ENCODE measurements at regions of chr3 and their contacts with region 1.

Region 1: DNA sequence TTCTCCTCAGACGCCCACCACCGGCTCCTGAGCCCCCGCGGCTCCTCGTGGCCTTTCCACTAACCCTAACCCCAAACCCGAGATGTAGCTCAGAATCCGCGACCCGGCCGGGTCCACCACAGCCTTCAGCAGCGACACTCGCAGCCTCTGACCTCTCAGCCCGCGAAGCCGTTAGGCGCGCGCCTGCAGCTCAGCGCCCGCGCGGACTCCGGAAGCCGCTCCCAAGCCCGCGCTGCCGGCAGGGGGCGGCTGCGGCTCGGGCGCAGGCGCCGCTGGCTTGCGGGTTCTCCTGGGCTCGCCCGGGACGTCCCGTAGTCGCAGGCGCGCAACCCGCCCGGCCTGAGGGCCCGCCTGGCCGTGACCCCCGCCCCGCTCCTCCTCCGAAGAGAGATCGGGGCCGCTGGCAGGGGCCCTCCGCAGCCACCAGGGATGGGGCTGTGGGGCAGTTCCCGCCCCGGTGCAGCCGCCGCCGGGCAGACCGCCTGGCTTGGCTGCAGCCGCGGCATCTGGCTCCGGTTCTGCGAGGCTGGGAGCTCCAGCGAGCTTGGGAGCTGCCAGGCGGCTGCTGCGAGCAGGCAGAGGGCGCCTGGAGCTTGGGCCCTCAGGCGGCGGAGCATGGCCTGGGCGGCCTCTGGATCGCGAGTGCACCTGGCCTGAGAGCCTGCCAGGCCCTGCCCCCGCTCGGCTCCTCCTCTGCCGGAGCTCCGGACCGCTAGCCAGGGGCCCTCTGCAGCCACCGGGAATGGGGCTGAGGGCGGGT is 120.7 kb downstream of the LMLN start:
- DNase-seq: peak; percentile 56
- ATAC-seq: peak; percentile 99
- H3K4me3 ChIP-seq: peak overlapping the region; percentile 40
- H3K27ac ChIP-seq: no peak overlapping the region
- H3K4me1 ChIP-seq: 0 out of 2 replicates have a peak, but pooled peaks cover 2% of the 10 kb centered on the region
- H3K27me3 ChIP-seq: peaks cover 37% of the 10 kb centered on the region
- CTCF ChIP-seq: peak; percentile 72
- POLR2A ChIP-seq: no peak
- RAD21 ChIP-seq: peak; percentile 27; the same call in 1 of the 2 replicates

Region 2: GRCh38 chr3:197234947-197235914 is 845.5 kb before region 1 on chr3:
- CTCF ChIA-PET with region 1: no interaction called
- POLR2A ChIA-PET with region 1: no interaction called
- dilution Hi-C with region 1: no loop called
- in situ Hi-C with region 1: no loop called
- intact Hi-C with region 1: no loop called
- DNase-seq: no peak
- ATAC-seq: no peak
- H3K4me3 ChIP-seq: no peak overlapping the region
- H3K27ac ChIP-seq: no peak overlapping the region
- H3K4me1 ChIP-seq: peaks cover 1% of the 10 kb centered on the region; the same call in 1 of the 2 replicates
- H3K27me3 ChIP-seq: no peaks in the 10 kb centered on the region
- CTCF ChIP-seq: no peak
- POLR2A ChIP-seq: no peak
- RAD21 ChIP-seq: no peak

Region 3: GRCh38 chr3:197858598-197858997 is 222.1 kb before region 1 on chr3:
- CTCF ChIA-PET with region 1: no interaction called
- POLR2A ChIA-PET with region 1: no interaction called
- dilution Hi-C with region 1: no loop called
- in situ Hi-C with region 1: no loop called
- intact Hi-C with region 1: no loop called
- DNase-seq: no peak
- ATAC-seq: no peak
- H3K4me3 ChIP-seq: no peak overlapping the region
- H3K27ac ChIP-seq: no peak overlapping the region
- H3K4me1 ChIP-seq: peaks cover 2% of the 10 kb centered on the region; the same call in 1 of the 2 replicates
- H3K27me3 ChIP-seq: no peaks in the 10 kb centered on the region
- CTCF ChIP-seq: no peak
- POLR2A ChIP-seq: no peak
- RAD21 ChIP-seq: no peak

Region 4: DNA sequence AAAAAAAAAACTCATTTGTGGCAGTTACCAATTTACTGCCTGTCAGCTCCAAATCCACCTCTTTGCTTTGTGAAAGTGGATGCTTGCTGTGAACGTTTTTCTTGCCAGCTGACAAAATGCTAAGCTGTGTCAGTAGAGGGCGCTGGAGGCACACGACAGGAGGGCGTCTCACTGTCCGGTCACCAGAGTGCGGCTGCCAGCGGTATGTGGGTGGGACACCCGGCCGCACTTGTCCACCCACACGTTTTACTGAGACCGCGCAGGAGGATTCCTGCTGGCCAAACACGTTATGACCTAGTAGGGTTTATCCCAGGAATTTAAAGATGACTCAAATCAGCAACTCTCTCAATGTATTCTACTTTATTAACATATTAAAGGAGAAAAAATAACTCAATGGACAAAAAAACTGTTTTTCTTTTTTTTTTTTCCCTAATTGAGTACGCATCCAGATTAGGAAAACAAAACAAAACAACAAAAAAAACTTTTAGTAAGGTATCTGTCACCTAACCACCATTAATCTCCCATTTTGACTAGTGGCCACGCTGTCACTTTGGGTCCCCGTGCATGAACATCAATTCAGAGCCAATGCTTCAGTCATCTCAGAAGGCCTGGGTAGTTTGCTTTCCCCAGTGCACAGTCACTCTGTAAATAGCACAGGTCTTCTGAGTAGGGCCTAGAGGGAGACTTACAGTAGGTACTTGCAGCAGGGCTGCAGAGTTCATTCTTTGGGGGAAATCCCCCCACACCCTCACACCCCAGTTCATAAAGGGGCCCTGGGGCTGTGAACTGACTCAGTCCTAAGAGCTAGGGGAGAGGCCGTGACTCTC is 174.5 kb before region 1 on chr3:
- CTCF ChIA-PET with region 1: no interaction called
- POLR2A ChIA-PET with region 1: no interaction called
- dilution Hi-C with region 1: no loop called
- in situ Hi-C with region 1: no loop called
- intact Hi-C with region 1: loop called (anchors 10 kb)
- DNase-seq: peak; percentile 98
- ATAC-seq: peak; percentile 99
- H3K4me3 ChIP-seq: no peak overlapping the region
- H3K27ac ChIP-seq: no peak overlapping the region
- H3K4me1 ChIP-seq: no peaks in the 10 kb centered on the region
- H3K27me3 ChIP-seq: no peaks in the 10 kb centered on the region
- CTCF ChIP-seq: peak; percentile 99
- POLR2A ChIP-seq: no peak
- RAD21 ChIP-seq: peak; percentile 97

Region 5: GRCh38 chr3:197959898-197960693 is 120.6 kb before region 1 on chr3 and contains the start of gene LMLN:
- CTCF ChIA-PET with region 1: interaction called, 3 read pairs
- POLR2A ChIA-PET with region 1: no interaction called
- dilution Hi-C with region 1: no loop called
- in situ Hi-C with region 1: no loop called
- intact Hi-C with region 1: loop called (anchors 10 kb)
- DNase-seq: peak; percentile 94
- ATAC-seq: peak; percentile 94
- H3K4me3 ChIP-seq: peak within 1 kb of the TSS; percentile 64
- H3K27ac ChIP-seq: peak within 1 kb of the TSS; percentile 28
- H3K4me1 ChIP-seq: 0 out of 2 replicates have a peak, but pooled peaks cover 3% of the 10 kb centered on the region
- H3K27me3 ChIP-seq: no peaks in the 10 kb centered on the region
- CTCF ChIP-seq: no peak
- POLR2A ChIP-seq: peak; percentile 91
- RAD21 ChIP-seq: no peak
- total RNA-seq, gene LMLN: 3.3 and 3.9 TPM in 2 replicates

Region 6: DNA sequence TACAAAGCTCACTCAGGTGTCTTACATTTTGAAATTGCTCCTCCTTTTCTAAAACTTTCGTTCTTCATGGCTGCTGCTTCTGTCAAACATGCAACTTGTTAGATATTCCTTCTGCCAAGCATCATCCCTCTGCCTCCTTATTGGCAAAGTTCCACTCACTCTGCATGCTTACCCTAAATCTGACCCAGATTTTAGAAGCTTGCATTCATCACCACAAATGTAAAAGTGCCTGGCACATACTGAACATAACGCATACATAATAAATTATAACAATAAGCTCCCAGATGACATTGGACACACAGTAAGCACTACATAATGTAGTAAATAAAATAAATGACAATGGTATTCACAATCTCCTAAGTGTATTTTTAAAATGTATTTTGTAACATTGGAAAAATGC is 13.3 kb before region 1 on chr3:
- CTCF ChIA-PET with region 1: interaction called, 13 read pairs
- POLR2A ChIA-PET with region 1: no interaction called
- dilution Hi-C with region 1: no loop called
- in situ Hi-C with region 1: no loop called
- intact Hi-C with region 1: no loop called
- DNase-seq: no peak
- ATAC-seq: no peak
- H3K4me3 ChIP-seq: no peak overlapping the region
- H3K27ac ChIP-seq: no peak overlapping the region
- H3K4me1 ChIP-seq: no peaks in the 10 kb centered on the region
- H3K27me3 ChIP-seq: peaks cover 27% of the 10 kb centered on the region
- CTCF ChIP-seq: no peak
- POLR2A ChIP-seq: no peak
- RAD21 ChIP-seq: no peak

Measured in IMR-90 (cell line).